ENCODE measurements at regions of chr3 and their contacts with region 1.

Region 1: DNA sequence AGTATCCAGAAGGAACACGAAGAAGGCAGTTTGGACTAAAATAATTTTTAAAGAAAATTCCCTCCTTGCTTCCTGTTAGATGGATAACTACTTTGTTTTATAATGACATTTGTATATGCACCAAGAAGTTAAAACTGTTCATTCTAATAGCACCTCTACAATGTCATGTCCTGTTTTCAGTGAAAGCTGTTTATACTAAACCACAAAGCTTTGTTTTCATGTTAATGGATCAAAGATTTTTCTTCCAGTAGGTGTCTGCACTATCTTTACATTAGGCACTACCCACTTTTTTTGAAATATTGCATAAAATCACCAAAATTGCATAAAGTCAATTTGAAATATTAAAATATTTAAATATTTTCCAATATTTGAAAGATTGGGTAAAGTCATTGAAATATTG is 10.1 kb downstream of the RARRES1 start:
- DNase-seq: no peak
- ATAC-seq: no peak
- H3K4me3 ChIP-seq: no peak overlapping the region
- H3K27ac ChIP-seq: no peak overlapping the region
- H3K4me1 ChIP-seq: peaks cover 9 to 14% of the 10 kb centered on the region in 2 experiments; a peak in 3 of 5 replicates
- H3K27me3 ChIP-seq: no peaks in the 10 kb centered on the region
- CTCF ChIP-seq: no peak
- EP300 ChIP-seq: no peak
- POLR2A ChIP-seq: no peak
- RAD21 ChIP-seq: no peak

Region 2: DNA sequence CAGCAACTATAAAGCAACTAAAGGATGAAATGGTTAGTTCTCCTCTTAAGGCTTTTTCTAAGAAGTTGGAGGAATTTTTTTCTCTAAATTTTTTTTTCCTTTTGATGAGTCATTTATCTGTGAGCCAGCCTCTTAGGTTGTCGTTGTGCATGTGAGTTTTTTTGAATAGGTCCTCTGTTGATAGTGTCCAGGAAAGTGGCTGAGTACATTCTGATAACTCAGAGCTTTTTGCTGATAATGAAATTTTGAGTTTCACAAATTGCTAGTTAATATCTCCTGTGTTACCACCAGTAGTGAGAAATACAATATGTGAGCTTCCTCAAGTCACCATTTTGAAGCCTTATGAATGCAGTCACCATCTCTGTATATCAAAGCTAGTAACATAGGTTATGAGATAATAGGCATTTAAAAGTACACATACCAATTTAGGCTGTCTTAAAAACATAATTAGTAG is 42.5 kb before region 1 on chr3:
- CTCF ChIA-PET with region 1: no interaction called
- POLR2A ChIA-PET with region 1: no interaction called
- in situ Hi-C with region 1: no loop called
- intact Hi-C with region 1: loop called (anchors 5 kb)
- DNase-seq: peak; percentile 31 to 85 (median 54)
- ATAC-seq: peak; percentile 92
- H3K4me3 ChIP-seq: no peak overlapping the region
- H3K27ac ChIP-seq: peak overlapping the region; percentile 85
- H3K4me1 ChIP-seq: peaks cover 11 to 38% of the 10 kb centered on the region in 2 experiments
- H3K27me3 ChIP-seq: no peaks in the 10 kb centered on the region
- CTCF ChIP-seq: no peak
- EP300 ChIP-seq: peak; percentile 96
- POLR2A ChIP-seq: no peak
- RAD21 ChIP-seq: no peak